Right ventricle myocardium inferior (tissue), 1 donor: ENCODE measurements at regions of chr9 and their contacts with region 1.

Region 1: DNA sequence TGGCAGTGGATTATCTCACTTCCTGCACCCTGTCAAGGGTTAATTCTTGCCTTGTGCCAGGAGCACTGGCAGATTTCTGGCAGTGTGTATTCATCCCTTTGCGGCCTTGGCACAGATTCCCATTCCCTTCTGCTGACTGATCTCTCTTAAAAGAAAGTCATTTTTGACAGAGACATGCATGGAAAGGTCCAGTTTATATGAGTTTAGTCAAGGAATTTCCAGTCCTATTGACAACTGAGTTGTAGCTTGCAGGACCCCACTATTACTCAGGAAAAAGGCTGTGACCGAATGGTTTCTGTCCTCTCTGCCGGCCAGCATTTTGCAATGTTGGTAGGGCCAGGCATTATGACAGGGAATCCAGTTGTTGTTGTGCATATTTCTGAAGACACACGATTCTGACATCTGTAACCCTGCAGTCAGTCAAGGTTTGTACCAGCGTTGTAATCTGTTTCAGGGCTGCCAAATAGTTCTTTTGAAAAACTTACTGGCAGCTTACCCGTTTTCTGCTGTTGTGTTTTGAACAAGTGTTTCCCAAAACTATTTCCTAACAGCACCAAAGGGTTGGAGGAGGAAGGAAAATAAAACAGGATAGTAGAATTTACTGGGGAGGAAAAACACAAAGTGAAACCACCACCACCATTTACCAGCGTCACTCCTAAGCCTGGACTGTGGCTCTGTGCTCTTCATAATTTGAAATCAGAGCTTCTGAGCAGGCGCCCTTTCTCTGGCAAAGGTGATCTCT is 243.4 kb upstream of the KLF4 start:
- DNase-seq: no peak
- ATAC-seq: peak; percentile 68

Region 2: GRCh38 chr9:107637421-107638420 is 95.2 kb before region 1 on chr9:
- intact Hi-C with region 1: loop called (anchors 2 kb)
- DNase-seq: peak; percentile 94
- ATAC-seq: peak; percentile 94

Region 3: GRCh38 chr9:107749787-107750444 is 17.0 kb after region 1 on chr9:
- intact Hi-C with region 1: loop called (anchors 2 kb)
- DNase-seq: peak; percentile 92
- ATAC-seq: peak; percentile 94

Region 4: GRCh38 chr9:107809871-107810460 is 77.0 kb after region 1 on chr9:
- intact Hi-C with region 1: loop called (anchors 10 kb)
- DNase-seq: no peak
- ATAC-seq: no peak

Region 5: DNA sequence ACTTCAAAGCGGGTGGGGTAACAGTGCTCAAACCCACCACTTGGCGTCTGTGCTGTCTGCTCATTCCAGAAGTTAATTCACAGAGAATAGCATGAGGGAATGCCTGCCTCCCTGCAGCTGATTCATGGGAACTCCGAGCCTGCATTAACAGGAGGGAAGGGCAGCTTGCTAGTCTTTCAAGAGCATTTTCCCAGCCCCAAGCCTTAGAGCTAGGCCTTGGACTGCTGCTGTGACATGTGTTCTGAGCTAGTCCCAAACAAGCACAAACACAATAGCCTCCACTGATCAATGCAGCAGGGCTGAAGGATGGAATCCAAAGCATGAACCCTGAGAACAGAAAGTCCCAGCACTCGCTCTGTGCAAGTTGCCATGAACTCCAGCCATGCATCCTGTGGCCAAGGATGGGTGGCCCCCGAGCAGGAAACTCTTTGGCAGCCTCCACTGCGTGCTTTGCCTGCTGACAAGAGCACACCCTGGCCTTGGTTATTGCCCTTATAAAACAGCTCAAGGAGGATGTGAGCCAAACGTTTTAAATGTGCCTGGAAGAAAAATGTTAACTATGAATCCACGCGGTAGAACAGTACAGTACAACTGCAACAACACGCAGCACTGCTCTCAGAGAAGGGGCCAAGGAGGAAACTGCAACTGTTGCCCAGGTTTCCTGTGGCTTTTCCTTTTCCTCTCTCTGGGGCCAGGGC is 409.7 kb after region 1 on chr9:
- intact Hi-C with region 1: loop called (anchors 10 kb)
- DNase-seq: peak; percentile 89
- ATAC-seq: peak; percentile 99